Left ventricle myocardium superior (tissue), 1 donor: ENCODE measurements at regions of chr14 and their contacts with region 1.

Region 1: GRCh38 chr14:35416108-35416750 is 11.7 kb upstream of the NFKBIA start:
- DNase-seq: no peak
- ATAC-seq: no peak

Region 2: GRCh38 chr14:35140718-35141581 is 275.3 kb before region 1 on chr14:
- intact Hi-C with region 1: loop called (anchors 5 kb)
- DNase-seq: no peak
- ATAC-seq: no peak